ENCODE measurements at regions of chr1 and their contacts with region 1.

Region 1: DNA sequence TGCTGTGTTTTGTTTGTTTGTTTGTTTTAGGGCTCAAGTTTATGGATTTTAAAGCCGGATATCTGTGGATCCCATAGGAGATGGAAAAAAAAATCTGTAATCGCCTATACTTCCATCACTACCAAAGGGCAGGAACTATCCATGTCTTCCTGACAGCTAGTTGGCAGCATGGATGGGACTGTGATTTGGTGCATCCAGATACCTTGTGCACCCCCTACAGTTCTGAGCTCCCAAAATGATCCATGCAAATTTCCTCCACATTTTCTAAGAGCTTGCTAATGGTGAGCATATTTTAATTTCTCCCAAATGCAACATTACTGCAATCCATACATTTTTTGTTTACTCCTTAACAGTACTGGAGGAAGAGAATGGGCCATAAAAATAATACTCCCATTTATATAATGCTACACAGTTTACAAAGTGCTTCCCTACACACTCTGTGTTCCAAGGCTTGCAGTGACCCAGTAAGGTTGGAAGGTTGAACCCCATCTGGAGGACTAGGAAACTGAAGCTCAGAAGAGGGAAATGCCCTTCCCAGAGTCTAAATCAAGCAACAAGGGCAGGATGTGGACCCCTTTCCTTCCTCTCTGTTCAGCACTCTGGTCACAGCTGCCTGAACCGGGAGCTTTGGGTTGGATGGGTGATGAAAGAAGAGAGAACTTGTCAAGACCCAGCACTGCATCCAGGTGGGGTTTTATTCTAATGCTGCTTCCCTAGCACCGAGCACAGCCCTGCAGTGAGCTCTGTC is 48.0 kb downstream of the CAPN8 start:
- DNase-seq: no peak
- H3K4me3 ChIP-seq: no peak overlapping the region
- H3K27ac ChIP-seq: no peak overlapping the region
- H3K4me1 ChIP-seq: peaks cover 0 to 8% (median 6%) of the 10 kb centered on the region in 4 experiments
- H3K27me3 ChIP-seq: no peaks in the 10 kb centered on the region

Region 2: GRCh38 chr1:223556414-223557129 is 60.9 kb before region 1 on chr1:
- CTCF ChIA-PET with region 1: interaction called, 65 read pairs
- POLR2A ChIA-PET with region 1: no interaction called
- DNase-seq: peak; percentile 54 to 74 (median 65)
- H3K4me3 ChIP-seq: no peak overlapping the region
- H3K27ac ChIP-seq: no peak overlapping the region
- H3K4me1 ChIP-seq: no peaks in the 10 kb centered on the region
- H3K27me3 ChIP-seq: no peaks in the 10 kb centered on the region

Region 3: GRCh38 chr1:223700942-223701637 is 83.6 kb after region 1 on chr1:
- CTCF ChIA-PET with region 1: no interaction called
- POLR2A ChIA-PET with region 1: no interaction called
- DNase-seq: peak in 2 of 3 donors; percentile 42 to 52
- H3K4me3 ChIP-seq: no peak overlapping the region
- H3K27ac ChIP-seq: peak overlapping the region in 1 of 2 experiments; percentile 20
- H3K4me1 ChIP-seq: peaks cover 0 to 10% (median 5%) of the 10 kb centered on the region in 4 experiments
- H3K27me3 ChIP-seq: peaks cover 0 to 2% (median 0%) of the 10 kb centered on the region in 5 experiments